ENCODE measurements at regions of chr9 and their contacts with region 1.

Region 1: DNA sequence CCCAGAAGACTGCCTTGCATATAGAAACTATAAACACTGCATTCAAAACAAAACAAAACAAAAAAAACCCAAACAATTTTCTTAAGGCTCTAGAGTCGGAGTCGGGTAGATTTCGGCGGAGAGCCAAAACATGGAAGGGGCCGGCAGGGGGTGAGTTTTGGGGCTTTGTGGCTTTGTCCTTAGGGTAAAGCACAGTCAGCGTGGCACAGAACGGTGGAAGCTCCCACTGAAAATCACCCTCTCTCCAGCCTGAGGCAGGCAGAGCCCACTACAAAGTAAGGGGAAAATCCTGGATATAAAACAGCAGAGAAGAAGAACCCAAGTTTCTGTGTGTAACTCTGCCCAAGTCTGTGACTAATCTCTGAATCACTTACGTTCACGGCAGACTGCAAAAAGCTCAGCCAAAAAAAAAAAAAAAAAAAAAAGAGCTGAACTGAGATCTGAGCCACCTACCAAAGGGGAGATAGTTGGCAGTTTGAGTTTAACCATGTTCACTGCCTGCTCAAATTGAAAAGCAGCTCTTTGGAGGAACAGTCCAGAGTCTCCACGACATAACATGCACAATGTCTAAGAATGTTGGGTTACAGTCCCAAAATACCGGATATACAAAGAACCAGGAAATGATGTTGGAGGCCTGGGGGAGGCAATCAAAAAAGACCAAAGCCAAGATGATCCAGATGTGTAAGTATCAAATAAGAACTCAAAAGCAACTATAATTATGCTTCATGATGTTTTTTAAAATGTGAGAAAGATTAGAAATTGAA is 26.6 kb upstream of the OR2K2 start:
- DNase-seq: no peak

Region 2: DNA sequence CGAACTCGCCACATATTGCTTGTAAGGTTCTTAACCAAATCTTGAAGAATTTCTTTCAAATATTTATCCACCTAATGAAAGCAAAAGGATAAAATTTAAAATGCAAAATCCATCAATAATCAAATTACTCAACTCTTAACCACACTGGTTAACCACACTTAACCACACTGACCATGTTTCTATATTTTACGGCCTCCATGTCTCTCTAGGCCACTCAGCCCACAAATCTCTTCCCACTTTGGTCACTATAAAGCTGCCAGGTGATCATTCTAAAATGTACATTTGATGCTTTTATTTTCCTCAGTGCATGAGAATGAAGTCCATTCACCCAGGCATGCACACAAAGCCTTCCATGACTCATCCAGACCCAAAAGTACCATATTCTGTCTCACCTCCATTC is 29.7 kb after region 1 on chr9:
- intact Hi-C with region 1: loop called in 1 of 2 experiments (anchors 1 kb)
- DNase-seq: no peak

Measured in posterior vena cava (tissue), 2 donors.